Calu3 (cell line): ENCODE measurements at regions of chr6 and their contacts with region 1.

Region 1: GRCh38 chr6:25874822-25875562 is 949 bp upstream of the SLC17A3 start:
- DNase-seq: no peak
- H3K4me3 Mint-ChIP-seq: no peak overlapping the region
- H3K27ac Mint-ChIP-seq: peak overlapping the region; percentile 34
- H3K4me1 Mint-ChIP-seq: peaks cover 31% of the 10 kb centered on the region
- H3K27me3 Mint-ChIP-seq: no peaks in the 10 kb centered on the region
- CTCF ChIP-seq: no peak

Region 2: DNA sequence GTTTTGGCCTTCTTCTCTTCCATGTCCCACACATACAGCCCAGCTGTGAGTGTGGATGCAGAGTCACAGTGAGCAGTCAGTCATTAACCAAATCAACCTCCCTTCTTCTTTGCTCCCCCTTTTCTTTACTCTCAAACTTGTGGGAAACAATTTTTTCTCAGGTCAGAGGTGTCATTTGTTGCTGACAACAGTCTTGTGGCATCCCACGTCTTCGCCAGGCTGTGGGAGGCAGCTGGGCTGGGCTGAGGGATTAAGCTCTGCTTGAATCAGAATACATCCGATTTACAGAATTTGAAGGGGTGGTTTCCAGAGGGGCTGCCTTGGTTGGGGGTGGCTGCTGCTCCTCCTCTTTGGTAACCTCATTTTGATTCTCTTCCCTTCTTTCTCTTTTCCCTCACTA is 182.5 kb before region 1 on chr6:
- CTCF ChIA-PET with region 1: no interaction called
- intact Hi-C with region 1: no loop called
- DNase-seq: no peak
- H3K4me3 Mint-ChIP-seq: no peak overlapping the region
- H3K27ac Mint-ChIP-seq: no peak overlapping the region
- H3K4me1 Mint-ChIP-seq: no peaks in the 10 kb centered on the region
- H3K27me3 Mint-ChIP-seq: no peaks in the 10 kb centered on the region
- CTCF ChIP-seq: no peak

Region 3: GRCh38 chr6:25835442-25836283 is 39.3 kb before region 1 on chr6:
- CTCF ChIA-PET with region 1: interaction called, 5 read pairs
- intact Hi-C with region 1: loop called (anchors 5 kb)
- DNase-seq: no peak
- H3K4me3 Mint-ChIP-seq: no peak overlapping the region
- H3K27ac Mint-ChIP-seq: no peak overlapping the region
- H3K4me1 Mint-ChIP-seq: peaks cover 17% of the 10 kb centered on the region
- H3K27me3 Mint-ChIP-seq: peaks cover 12% of the 10 kb centered on the region
- CTCF ChIP-seq: no peak